Activated T-helper 1 cell treated with anti-CD3 and anti-CD28 coated beads, Interleukin-12 subunit alpha, Interleukin-12 subunit beta, Interleukin-2, Interleukin-4 antibody, amounts not matched to agents 30 ng/mL and 10 ng/mL and 1 ng/mL, durations not matched to agents 14 hours and 24 hours and 36 hours (primary cell): ENCODE measurements at regions of chrX and their contacts with region 1.

Region 1: DNA sequence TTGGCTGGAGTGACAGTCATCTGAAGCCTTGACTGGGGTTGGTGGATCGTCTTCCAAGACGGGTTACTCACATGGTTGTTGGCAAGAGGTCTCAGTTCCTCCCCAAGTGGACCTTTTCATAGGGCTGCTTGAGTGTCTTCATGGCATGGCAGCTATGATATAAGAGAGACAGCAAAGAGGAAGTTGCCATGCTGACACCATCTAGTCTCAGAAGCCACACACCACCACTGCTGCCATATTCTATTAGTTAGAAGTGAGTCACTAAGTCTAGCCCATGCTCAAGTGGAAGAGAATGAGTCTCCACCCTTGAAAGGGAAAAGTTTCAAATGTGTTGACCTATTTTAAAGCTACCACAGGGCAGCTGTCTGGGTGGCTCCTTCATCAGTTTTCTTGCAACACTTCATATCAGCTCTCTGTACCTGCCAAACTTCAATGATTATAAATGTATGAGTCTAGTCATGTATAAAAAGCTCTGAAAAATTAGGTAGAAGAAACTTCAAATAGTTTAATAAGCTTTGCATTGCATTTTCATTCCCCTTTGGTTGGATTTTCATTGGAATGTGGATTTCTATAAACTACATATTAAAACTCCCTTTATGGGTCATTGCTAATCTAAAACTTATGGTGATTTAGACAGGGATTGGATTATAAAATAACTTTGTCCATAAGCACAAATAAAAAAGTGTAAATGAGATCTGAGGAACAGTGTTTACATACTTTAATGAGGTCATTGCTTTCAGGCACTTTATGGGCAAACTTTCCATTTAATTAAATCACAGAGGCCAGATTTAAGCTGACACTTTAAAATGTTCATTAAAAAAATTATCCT is 68.0 kb upstream of the ATXN3L start:
- DNase-seq: no peak
- H3K4me3 Mint-ChIP-seq: no peak overlapping the region
- H3K27ac Mint-ChIP-seq: no peak overlapping the region
- H3K4me1 Mint-ChIP-seq: peaks cover 13% of the 10 kb centered on the region
- H3K27me3 Mint-ChIP-seq: no peaks in the 10 kb centered on the region

Region 2: GRCh38 chrX:13283512-13283911 is 104.4 kb before region 1 on chrX:
- intact Hi-C with region 1: no loop called
- DNase-seq: no peak
- H3K4me3 Mint-ChIP-seq: no peak overlapping the region
- H3K27ac Mint-ChIP-seq: no peak overlapping the region
- H3K4me1 Mint-ChIP-seq: no peaks in the 10 kb centered on the region
- H3K27me3 Mint-ChIP-seq: peaks cover 2% of the 10 kb centered on the region

Region 3: GRCh38 chrX:13428055-13428786 is 40.3 kb after region 1 on chrX:
- intact Hi-C with region 1: loop called (anchors 5 kb)
- DNase-seq: no peak
- H3K4me3 Mint-ChIP-seq: no peak overlapping the region
- H3K27ac Mint-ChIP-seq: no peak overlapping the region
- H3K4me1 Mint-ChIP-seq: peaks cover 7% of the 10 kb centered on the region
- H3K27me3 Mint-ChIP-seq: no peaks in the 10 kb centered on the region